ENCODE measurements at regions of chr7 and their contacts with region 1.

Region 1: DNA sequence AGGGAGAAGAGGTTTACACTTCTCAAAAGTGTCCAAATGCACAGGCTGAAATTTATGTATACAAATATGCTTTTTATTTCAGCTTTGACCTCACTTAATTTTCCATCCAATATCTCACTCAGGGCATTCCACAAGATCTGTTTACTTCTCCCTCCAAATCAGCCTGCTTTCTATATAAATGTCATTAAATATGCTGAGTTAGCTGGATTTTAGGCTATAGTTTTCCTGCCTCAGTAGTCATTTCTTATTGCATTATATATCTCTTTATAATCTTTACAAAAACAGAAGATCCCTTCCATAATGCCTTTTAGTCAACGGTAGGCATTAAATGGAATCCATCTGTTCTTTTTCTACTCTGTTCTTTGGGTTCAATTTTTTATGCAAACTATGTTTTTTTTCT is 71.7 kb upstream of the KCND2 start:
- DNase-seq: no peak
- H3K4me3 Mint-ChIP-seq: no peak overlapping the region
- H3K27ac Mint-ChIP-seq: no peak overlapping the region
- H3K4me1 Mint-ChIP-seq: no peaks in the 10 kb centered on the region
- H3K27me3 Mint-ChIP-seq: no peaks in the 10 kb centered on the region
- CTCF ChIP-seq: no peak

Region 2: DNA sequence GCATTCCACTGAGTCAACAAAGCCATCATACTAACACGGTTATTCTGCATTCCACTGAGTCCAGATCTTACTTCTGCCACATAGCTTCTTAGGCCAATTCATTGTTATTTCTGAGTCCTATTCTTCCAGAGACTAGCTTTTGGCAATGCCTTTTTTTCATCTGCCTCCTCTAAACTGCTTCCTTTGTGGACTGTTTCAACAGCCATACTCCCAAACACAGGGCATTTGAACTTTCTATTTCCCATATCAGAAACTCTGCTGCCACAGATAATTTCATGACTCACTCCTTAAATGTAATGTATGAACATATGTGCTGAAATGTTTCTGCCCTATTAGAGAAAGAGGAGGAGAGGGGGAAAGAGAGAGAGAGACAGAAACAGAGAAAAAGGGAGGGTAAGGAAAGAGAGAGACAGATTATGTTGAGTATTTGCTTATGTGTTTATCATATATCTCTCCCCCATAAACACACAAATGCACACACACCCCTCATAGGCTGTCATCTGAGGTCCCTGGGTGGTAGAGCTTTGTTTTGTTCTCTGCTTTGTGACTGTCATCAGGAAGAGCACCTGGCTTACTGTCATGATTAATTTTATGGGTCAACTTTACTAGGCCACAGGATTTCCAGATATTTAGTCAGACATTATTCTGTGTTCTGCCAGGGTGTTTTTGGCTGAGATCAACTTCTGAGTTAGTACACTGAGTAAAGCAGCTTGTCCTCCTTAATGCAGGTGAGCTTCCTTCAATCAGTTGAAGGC is 236.3 kb before region 1 on chr7:
- CTCF ChIA-PET with region 1: no interaction called
- intact Hi-C with region 1: loop called (anchors 1 kb)
- DNase-seq: no peak
- H3K4me3 Mint-ChIP-seq: no peak overlapping the region
- H3K27ac Mint-ChIP-seq: no peak overlapping the region
- H3K4me1 Mint-ChIP-seq: no peaks in the 10 kb centered on the region
- H3K27me3 Mint-ChIP-seq: no peaks in the 10 kb centered on the region
- CTCF ChIP-seq: no peak

Region 3: GRCh38 chr7:120521762-120522737 is 320.8 kb after region 1 on chr7:
- CTCF ChIA-PET with region 1: no interaction called
- intact Hi-C with region 1: no loop called
- DNase-seq: no peak
- H3K4me3 Mint-ChIP-seq: no peak overlapping the region
- H3K27ac Mint-ChIP-seq: no peak overlapping the region
- H3K4me1 Mint-ChIP-seq: no peaks in the 10 kb centered on the region
- H3K27me3 Mint-ChIP-seq: no peaks in the 10 kb centered on the region
- CTCF ChIP-seq: no peak